ENCODE measurements at regions of chr11 and their contacts with region 1.

Region 1: DNA sequence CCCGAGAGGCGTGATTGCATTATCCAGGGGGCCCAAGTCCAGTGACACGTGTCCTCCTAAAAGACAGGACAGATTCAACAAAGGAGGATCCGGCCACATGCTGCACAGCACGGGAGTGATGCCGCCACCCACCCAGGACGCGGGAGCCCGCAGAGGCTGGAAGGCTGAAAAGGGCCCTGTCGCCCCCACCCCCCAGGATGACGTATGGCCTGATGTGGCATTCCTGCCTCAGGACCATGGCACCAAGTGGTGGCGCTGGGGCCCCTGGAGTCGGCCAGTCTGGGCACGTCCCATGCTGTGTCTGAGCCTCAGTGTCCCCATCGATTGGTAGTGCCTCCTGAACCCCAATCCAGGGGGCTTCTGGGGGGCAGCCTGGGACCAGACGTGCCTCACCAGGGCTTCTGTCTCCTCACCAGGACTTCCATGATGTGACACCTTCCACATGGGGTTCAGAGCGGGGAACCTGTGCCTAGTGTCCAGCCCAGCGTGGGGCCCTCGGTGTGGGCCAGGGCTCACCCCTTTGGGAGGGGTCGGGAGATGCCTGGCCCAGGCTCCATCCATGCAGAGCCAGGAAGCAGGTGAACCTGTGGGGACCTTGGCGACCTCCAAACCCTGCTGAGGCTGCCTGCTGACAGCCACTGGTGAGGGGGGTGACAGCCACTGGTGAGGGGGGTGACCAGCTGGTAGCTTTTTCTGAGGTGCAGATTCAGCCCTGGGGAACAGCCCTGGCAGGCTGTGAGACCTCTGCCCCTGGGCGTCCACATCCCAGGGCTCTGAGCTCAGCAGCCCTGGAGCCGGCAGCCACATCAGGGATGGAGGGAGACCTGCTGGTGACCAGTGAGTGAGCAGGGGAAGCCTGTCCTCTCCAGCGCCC is 75.3 kb downstream of the KCNQ1 start:
- DNase-seq: no peak
- ATAC-seq: no peak
- H3K4me3 ChIP-seq: no peak overlapping the region
- H3K27ac ChIP-seq: no peak overlapping the region
- H3K4me1 ChIP-seq: no peaks in the 10 kb centered on the region
- H3K27me3 ChIP-seq: no peaks in the 10 kb centered on the region
- CTCF ChIP-seq: no peak

Region 2: DNA sequence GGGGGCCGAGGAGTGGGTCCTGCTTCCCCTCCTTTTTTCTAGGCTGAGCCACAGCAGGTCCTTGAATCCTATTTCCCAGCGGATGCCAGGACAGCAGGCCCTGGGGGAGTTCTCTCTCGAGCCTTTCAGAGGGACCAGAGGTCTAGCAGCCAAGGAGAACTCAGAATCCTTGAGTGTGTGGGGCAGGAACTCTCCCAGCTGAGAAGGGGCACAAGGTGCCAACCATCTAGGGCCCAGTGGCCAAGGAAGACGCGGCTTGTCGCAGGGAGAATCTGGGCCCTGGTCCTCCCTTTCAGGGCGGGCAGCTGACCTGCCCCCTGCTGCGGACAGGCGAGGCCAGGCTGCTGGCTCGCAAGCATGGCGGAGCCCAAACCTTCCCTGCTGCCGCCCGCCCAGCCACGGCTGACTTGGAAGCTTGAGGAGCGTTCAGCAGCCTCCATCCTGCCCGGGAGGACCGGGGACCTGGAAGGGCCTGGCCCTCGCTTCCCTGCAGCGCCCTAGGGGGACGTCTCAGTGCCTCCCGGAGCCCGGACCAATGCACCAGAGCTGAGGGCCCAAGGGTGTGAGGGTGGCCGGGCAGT is 120.5 kb before region 1 on chr11:
- CTCF ChIA-PET with region 1: no interaction called
- POLR2A ChIA-PET with region 1: no interaction called
- intact Hi-C with region 1: no loop called
- DNase-seq: no peak
- ATAC-seq: peak; percentile 4
- H3K4me3 ChIP-seq: peak overlapping the region; percentile 87
- H3K27ac ChIP-seq: peak overlapping the region; percentile 85
- H3K4me1 ChIP-seq: peaks cover 11% of the 10 kb centered on the region
- H3K27me3 ChIP-seq: no peaks in the 10 kb centered on the region
- CTCF ChIP-seq: no peak

Region 3: DNA sequence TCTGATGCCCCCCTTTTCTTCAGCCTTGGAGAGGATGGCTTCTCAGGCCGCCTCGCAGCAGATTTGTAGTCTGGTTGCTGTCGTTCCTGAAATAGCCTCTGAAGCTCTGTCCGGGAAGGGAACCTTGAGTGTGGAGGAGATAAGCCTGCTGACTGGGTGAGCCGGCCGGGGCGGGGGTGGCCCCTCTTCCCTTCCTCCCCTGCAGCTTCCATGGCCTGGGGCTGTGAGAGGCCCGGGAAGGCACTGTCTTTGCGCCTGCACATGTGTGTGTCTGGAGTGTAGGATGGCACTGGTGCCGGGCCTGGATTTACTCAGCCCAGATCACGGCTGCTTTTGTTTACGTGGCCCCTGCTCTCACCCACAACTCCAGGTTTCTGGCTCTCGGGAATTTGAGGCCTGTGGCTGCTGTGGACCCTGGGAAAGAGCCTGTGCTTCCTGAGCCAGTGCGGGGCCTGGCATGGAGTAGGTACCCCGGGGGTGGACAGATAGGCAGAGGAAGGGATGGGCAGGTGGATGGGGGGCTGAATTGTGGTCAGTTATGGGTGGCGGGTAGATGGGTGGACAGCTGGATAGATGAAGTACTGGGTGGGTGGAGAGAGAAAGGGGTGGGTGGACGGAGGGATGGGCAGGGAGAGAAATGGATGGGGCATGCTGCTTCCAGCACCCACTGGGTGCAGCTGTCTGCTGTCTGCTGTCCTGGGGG is 58.7 kb before region 1 on chr11:
- CTCF ChIA-PET with region 1: no interaction called
- POLR2A ChIA-PET with region 1: interaction called, 17 read pairs
- intact Hi-C with region 1: no loop called
- DNase-seq: no peak
- ATAC-seq: no peak
- H3K4me3 ChIP-seq: no peak overlapping the region
- H3K27ac ChIP-seq: no peak overlapping the region
- H3K4me1 ChIP-seq: peaks cover 5% of the 10 kb centered on the region; the same call in 1 of the 2 replicates
- H3K27me3 ChIP-seq: no peaks in the 10 kb centered on the region
- CTCF ChIP-seq: no peak

Region 4: DNA sequence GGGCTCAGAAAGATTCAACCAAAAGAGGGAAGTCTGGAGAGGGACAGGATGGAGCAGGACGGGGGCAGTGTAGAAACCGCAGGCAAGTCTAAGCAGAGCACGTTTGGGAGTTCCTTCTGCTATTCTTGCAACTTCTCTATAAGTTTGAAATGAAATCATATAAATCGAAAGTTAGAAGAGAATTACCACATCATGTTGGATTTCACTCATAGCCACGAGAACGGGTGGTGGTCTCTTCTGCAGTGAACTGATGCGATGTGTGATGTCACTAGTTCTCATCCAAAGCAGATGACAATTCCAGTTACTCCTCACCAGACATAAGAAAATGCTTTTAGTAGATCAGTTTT is 39.3 kb before region 1 on chr11:
- CTCF ChIA-PET with region 1: no interaction called
- POLR2A ChIA-PET with region 1: no interaction called
- intact Hi-C with region 1: no loop called
- DNase-seq: no peak
- ATAC-seq: no peak
- H3K4me3 ChIP-seq: no peak overlapping the region
- H3K27ac ChIP-seq: no peak overlapping the region
- H3K4me1 ChIP-seq: no peaks in the 10 kb centered on the region
- H3K27me3 ChIP-seq: peaks cover 14% of the 10 kb centered on the region; the same call in 1 of the 2 replicates
- CTCF ChIP-seq: no peak

Measured in PC-3 (cell line).